Activated CD4-positive, alpha-beta T cell treated with anti-CD3 and anti-CD28 coated beads for 36 hours (primary cell): ENCODE measurements at regions of chr3 and their contacts with region 1.

Region 1: GRCh38 chr3:99817437-99818240 is at the start of gene CMSS1:
- DNase-seq: peak; percentile 98
- ATAC-seq: peak; percentile 92
- H3K4me3 Mint-ChIP-seq: peak within 1 kb of the TSS; percentile 85
- H3K27ac Mint-ChIP-seq: peak within 1 kb of the TSS; percentile 97
- H3K4me1 Mint-ChIP-seq: peaks cover 42% of the 10 kb centered on the region
- H3K27me3 Mint-ChIP-seq: no peaks in the 10 kb centered on the region
- total RNA-seq, gene CMSS1: 94.0 to 96.3 TPM

Region 2: DNA sequence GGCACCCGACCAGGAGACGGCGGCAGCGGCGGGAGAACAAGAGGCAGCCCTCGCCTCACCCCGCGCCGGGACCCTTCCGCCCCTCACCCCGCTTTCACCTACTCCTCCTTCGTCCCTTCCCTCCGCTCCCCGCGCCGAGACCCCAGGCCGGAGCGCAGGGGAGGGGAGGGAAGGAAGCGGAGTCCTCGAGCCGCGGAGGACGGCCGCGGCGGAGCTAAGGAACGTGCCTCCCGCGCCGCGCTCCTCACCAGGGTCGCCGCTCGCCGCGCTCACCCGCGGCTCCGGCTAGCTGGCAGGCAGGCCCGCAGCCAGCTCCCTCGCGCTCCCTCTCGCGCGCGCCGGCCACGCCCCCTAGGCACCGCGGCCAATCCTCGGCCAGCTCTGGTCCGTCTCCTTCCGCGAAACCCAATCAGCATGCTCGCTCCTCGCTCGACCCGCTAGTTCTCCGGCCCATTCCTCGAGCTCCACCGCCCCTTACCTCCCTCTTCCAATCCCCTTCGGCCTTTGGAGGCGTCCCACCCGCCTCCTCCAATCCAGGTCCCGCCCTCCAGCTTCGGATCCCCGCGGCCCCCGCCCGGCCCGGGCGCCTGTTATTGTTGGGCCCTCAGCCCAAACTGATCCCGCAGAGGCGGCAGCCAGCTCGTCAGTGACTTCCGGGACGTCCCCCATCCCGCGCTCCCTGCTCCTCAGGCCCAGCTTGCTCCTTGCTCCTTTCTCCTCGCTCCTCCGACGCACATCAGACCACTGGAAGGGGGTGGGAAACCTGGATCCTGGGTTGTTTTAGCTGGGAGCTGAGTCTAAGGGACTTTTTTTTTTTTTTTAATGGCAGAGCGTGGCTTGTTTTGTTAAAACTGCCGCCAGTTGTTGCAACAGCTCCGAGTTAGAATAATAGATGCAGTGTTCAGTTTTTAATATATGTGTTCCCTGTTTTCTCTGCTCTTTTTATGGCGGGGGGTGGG is 916.0 kb before region 1 on chr3 and contains the start of gene DCBLD2:
- CTCF ChIA-PET with region 1: no interaction called
- POLR2A ChIA-PET with region 1: interaction called, 9 read pairs
- intact Hi-C with region 1: loop called (anchors 2 to 5 kb)
- DNase-seq: peak; percentile 96
- ATAC-seq: peak; percentile 100
- H3K4me3 Mint-ChIP-seq: peak within 1 kb of the TSS; percentile 80
- H3K27ac Mint-ChIP-seq: peak within 1 kb of the TSS; percentile 69
- H3K4me1 Mint-ChIP-seq: peaks cover 16% of the 10 kb centered on the region
- H3K27me3 Mint-ChIP-seq: peaks cover 5% of the 10 kb centered on the region
- total RNA-seq, gene DCBLD2: 1.9 to 2.5 TPM

Region 3: DNA sequence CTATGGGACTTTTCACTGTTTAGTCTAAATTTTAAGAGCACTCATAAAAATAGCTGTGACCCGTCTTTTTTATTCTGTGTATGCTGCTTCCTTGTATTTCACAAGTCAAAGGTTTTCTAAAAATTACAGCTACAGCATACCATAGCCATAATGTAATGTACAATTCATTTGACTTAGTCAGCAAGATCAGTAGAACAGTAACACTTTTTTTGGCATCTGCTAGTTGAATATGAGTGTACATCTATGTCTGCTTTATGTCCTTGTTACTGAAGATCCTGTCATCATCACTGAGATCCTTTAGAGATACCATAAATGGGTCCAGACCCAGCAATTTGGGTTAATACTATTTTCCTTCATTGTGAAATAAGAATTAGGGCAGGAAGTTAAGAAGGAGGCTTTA is 42.2 kb after region 1 on chr3:
- CTCF ChIA-PET with region 1: no interaction called
- POLR2A ChIA-PET with region 1: interaction called, 3 read pairs
- intact Hi-C with region 1: loop called in 1 of 2 experiments (anchors 2 kb)
- DNase-seq: no peak
- ATAC-seq: no peak
- H3K4me3 Mint-ChIP-seq: no peak overlapping the region
- H3K27ac Mint-ChIP-seq: no peak overlapping the region
- H3K4me1 Mint-ChIP-seq: peaks cover 19% of the 10 kb centered on the region
- H3K27me3 Mint-ChIP-seq: no peaks in the 10 kb centered on the region

Region 4: DNA sequence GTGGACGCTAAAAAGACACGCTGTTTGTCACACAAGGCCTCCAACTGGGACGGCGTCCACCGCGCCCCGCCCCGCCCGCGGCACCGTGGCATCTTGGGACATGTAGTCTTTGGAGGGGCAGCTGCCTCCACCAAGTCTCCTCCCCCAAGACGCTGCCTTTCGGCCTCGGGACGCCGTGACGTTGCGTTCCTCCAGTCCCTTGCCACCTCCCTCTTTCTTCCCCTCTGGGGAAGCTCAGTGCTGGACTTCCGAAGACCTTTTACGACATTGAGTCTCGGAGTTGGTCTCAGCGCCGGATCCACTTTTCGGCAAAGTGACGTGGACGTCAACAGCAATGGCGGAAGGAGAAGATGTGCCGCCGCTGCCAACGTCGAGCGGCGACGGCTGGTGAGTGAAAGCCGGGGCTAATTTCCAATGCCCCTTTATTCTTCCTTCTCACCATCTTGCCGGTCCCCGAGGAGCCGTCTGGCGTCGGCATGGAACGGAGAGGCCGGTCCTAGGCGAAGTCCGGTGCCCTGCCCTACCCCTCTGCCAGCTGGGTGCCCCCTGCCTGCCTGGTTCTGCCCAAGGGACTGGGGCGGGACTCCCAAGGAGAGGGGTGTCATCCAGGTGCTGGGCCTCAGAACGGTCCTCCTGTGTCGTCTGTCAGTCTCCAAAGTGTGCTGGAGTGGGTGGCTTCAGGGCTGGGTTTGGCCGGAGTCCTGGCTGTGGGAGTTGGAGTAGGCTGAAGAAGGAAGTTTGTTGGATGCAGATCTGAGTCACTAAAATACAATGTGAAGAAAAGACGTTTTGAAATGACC is 443.2 kb after region 1 on chr3 and contains the start of gene TBC1D23:
- CTCF ChIA-PET with region 1: no interaction called
- POLR2A ChIA-PET with region 1: no interaction called
- intact Hi-C with region 1: loop called (anchors 1 to 5 kb)
- DNase-seq: peak; percentile 98
- ATAC-seq: peak; percentile 100
- H3K4me3 Mint-ChIP-seq: peak within 1 kb of the TSS; percentile 91
- H3K27ac Mint-ChIP-seq: peak within 1 kb of the TSS; percentile 96
- H3K4me1 Mint-ChIP-seq: peaks cover 58% of the 10 kb centered on the region
- H3K27me3 Mint-ChIP-seq: no peaks in the 10 kb centered on the region
- total RNA-seq, gene TBC1D23: 17.6 to 19.4 TPM

Region 5: DNA sequence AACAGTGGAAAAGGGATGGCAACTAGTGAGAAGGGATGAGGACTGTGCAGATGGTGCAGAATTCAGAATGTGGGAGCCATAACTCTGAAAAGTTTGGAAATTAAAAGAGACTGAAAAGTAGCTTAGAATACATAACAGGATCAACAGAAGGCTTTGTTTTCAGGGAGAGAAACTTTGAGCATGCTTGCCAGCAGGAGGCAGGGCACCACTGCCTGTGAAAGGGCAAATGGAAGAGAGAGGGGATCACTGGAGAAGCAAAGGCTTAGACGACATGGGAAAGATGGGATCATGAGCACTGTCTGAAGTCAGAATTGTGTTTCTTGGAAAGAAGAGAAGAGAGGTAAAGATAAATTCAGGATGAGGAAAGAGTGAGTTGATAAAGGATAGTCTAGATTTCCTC is 1076.0 kb after region 1 on chr3:
- CTCF ChIA-PET with region 1: no interaction called
- POLR2A ChIA-PET with region 1: no interaction called
- intact Hi-C with region 1: no loop called
- DNase-seq: no peak
- ATAC-seq: no peak
- H3K4me3 Mint-ChIP-seq: no peak overlapping the region
- H3K27ac Mint-ChIP-seq: no peak overlapping the region
- H3K4me1 Mint-ChIP-seq: peaks cover 3% of the 10 kb centered on the region
- H3K27me3 Mint-ChIP-seq: peaks cover 18% of the 10 kb centered on the region